ENCODE measurements at regions of chr11 and their contacts with region 1.

Region 1: GRCh38 chr11:59753650-59754493 is 1.3 kb upstream of the STX3 start:
- DNase-seq: peak; percentile 89
- H3K4me3 Mint-ChIP-seq: peak overlapping the region; percentile 81
- H3K27ac Mint-ChIP-seq: peak overlapping the region; percentile 85
- H3K4me1 Mint-ChIP-seq: peaks cover 27% of the 10 kb centered on the region
- H3K27me3 Mint-ChIP-seq: no peaks in the 10 kb centered on the region
- CTCF ChIP-seq: peak; percentile 91

Region 2: DNA sequence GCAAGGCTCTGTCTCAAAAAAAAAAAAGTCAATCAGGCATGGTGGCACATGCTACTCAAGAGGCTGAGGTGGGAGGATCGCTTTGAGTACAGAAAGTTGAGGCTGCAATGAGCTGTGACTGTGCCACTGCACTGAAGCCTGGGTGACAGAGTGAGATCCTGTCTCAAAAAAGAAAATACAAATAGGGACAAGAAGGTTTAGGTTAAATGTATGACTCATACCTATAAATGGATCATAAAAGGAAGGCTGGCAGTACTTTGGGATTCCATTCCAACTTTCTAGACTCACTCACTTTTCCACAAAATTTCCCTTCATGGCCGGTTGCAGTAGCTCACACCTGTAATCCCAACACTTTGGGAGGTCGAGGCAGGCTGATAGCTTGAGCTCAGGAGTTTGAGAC is 112.7 kb before region 1 on chr11:
- CTCF ChIA-PET with region 1: no interaction called
- intact Hi-C with region 1: no loop called
- DNase-seq: no peak
- H3K4me3 Mint-ChIP-seq: no peak overlapping the region
- H3K27ac Mint-ChIP-seq: no peak overlapping the region
- H3K4me1 Mint-ChIP-seq: no peaks in the 10 kb centered on the region
- H3K27me3 Mint-ChIP-seq: no peaks in the 10 kb centered on the region
- CTCF ChIP-seq: no peak

Region 3: GRCh38 chr11:59668950-59669610 is 84.8 kb before region 1 on chr11 and contains the start of gene PATL1:
- CTCF ChIA-PET with region 1: interaction called, 6 read pairs
- intact Hi-C with region 1: loop called (anchors 5 kb)
- DNase-seq: peak; percentile 98
- H3K4me3 Mint-ChIP-seq: peak within 1 kb of the TSS; percentile 88
- H3K27ac Mint-ChIP-seq: peak within 1 kb of the TSS; percentile 97
- H3K4me1 Mint-ChIP-seq: peaks cover 35% of the 10 kb centered on the region
- H3K27me3 Mint-ChIP-seq: no peaks in the 10 kb centered on the region
- CTCF ChIP-seq: no peak
- total RNA-seq, gene PATL1: 56.9 and 59.8 TPM in 2 replicates

Region 4: DNA sequence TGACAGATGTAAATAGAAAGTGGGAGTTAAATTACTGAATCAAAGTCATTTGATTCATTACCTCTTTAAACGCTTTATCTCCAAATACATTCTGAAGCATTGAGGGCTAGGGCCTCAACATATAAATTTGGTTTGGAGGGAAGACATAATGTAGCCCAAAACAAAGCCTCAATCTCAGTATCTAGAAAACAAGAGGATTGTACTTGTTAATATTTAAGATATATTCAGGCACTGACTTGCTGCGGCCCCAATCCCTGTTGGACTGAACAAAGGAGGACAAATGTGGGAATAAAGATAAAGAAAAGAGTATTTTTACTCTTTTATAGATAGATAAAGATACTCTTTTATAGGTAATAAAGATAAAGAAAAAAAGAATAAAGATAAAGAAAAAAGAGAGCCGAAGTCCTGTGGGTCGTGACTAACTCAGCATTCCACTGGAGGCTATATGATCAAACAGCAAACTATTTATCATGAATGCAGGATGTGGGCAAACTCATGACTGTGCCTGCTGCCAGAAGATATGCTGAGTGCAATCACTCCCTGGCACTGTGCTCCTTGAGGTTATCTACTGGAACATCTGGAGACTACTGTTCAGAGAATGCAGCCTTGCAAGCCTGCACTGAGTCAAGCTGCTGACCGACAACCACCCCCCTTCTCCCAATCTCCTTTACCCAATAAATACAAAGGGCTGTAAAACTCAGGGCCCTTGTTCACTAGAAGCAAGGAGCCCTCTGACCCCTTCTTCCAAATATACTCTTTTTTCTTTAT is 47.2 kb before region 1 on chr11:
- CTCF ChIA-PET with region 1: no interaction called
- intact Hi-C with region 1: no loop called
- DNase-seq: peak; percentile 38
- H3K4me3 Mint-ChIP-seq: no peak overlapping the region
- H3K27ac Mint-ChIP-seq: peak overlapping the region; percentile 20
- H3K4me1 Mint-ChIP-seq: peaks cover 20% of the 10 kb centered on the region
- H3K27me3 Mint-ChIP-seq: no peaks in the 10 kb centered on the region
- CTCF ChIP-seq: no peak

Region 5: DNA sequence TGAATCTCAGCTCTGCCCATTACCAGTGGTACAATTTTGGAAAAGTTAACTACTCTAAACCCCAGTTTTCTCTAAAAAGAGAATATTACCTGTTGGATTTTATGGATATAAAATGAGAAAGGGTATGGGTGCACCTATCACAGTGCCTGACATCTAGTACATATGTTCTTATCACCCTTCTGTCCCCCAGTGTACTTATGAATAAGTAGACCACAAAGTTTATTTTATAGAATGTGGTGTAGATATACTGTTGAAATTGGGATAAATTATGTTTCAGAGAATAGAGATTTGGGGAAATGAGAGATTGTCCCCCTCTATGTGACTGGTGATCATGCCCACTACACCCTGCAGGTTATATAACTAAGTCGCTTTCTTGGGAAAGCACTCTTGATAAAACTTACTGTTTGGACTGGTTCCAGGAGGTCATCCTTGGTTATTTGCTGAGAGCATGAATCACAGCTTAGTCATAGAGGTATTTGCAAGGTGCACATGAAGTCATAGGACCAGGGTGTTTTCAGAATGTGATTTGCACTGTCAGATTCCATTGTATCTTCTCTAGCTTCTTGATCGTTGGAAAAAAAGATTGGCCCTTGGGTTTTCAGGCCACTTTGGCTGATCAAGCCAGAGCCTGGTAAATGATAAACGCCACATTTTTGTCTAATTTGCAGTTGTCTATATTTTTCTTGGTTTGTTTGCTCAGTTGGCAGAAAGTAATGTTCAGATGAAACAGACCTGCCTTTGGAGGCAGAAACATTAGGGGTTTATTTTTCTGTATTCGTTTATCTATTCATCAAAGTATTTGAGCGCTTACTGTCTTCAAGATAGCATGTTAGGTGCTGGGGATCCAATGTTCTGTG is 22.6 kb after region 1 on chr11:
- CTCF ChIA-PET with region 1: interaction called, 12 read pairs
- intact Hi-C with region 1: loop called (anchors 2 kb)
- DNase-seq: peak; percentile 58
- H3K4me3 Mint-ChIP-seq: peak overlapping the region; percentile 50
- H3K27ac Mint-ChIP-seq: peak overlapping the region; percentile 71
- H3K4me1 Mint-ChIP-seq: peaks cover 54% of the 10 kb centered on the region
- H3K27me3 Mint-ChIP-seq: no peaks in the 10 kb centered on the region
- CTCF ChIP-seq: no peak

Region 6: GRCh38 chr11:59787816-59788215 is 33.9 kb after region 1 on chr11:
- CTCF ChIA-PET with region 1: interaction called, 12 read pairs
- intact Hi-C with region 1: loop called (anchors 5 kb)
- DNase-seq: no peak
- H3K4me3 Mint-ChIP-seq: peak overlapping the region; percentile 13
- H3K27ac Mint-ChIP-seq: peak overlapping the region; percentile 78
- H3K4me1 Mint-ChIP-seq: peaks cover 45% of the 10 kb centered on the region
- H3K27me3 Mint-ChIP-seq: no peaks in the 10 kb centered on the region
- CTCF ChIP-seq: no peak

Region 7: DNA sequence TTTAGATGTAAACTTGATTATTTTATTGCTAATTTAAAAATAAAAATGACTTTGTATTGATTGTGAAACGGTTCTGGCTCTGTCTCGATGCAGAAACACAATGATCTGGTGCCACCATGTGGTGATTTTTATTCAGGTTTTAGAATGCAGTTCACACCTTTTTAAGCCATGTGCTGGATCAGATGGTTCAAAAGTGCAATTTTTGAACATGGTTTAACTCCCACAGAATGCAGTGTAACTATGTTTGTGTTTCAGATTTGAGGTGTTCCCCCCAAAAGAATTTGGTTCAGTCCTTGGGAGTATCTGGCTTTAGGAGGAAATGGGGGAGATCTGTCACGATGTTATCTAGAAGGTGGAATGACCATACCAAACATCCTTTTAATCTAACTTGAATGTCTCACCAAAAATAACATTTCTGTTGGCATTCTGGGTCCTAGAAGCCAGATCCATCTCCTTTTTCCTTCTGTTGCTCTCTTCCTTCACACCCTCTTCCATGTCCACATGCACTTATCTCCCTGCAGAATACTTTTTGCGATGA is 48.8 kb after region 1 on chr11:
- CTCF ChIA-PET with region 1: interaction called, 14 read pairs
- intact Hi-C with region 1: loop called (anchors 1 kb)
- DNase-seq: peak; percentile 60
- H3K4me3 Mint-ChIP-seq: no peak overlapping the region
- H3K27ac Mint-ChIP-seq: no peak overlapping the region
- H3K4me1 Mint-ChIP-seq: peaks cover 16% of the 10 kb centered on the region
- H3K27me3 Mint-ChIP-seq: no peaks in the 10 kb centered on the region
- CTCF ChIP-seq: peak; percentile 51

Region 8: DNA sequence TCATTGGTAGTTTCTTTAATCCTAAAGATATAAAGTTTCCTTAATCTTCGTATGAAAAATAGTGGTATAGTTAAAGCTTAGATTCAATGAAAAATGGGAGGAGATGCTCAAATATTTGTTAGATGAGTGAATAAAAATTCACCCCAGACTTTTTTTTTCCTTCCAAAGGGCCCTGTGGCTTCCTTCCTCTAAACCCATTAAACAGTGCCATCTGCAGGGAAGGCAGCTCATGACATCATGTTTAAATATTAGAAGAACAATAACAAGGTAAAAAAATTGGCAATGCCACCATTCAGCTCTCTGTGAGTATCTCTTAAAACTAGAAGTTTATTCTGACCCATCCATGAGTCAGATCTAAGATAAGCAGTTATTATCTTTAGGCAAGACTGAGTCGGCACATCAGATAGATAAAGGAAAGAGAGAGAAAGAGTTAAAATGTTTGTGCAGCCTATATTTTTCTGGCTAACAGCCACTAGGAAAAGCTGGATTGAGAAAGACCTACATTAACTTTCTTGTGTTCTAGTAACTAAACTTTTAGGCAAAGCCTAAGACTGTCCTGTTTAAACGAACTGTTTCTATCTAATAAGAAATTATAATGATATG is 165.2 kb after region 1 on chr11:
- CTCF ChIA-PET with region 1: interaction called, 5 read pairs
- intact Hi-C with region 1: loop called (anchors 10 kb)
- DNase-seq: peak; percentile 59
- H3K4me3 Mint-ChIP-seq: no peak overlapping the region
- H3K27ac Mint-ChIP-seq: peak overlapping the region; percentile 23
- H3K4me1 Mint-ChIP-seq: peaks cover 24% of the 10 kb centered on the region
- H3K27me3 Mint-ChIP-seq: no peaks in the 10 kb centered on the region
- CTCF ChIP-seq: peak; percentile 59

Measured in Calu3 (cell line).